Aorta (tissue), 5 donors: ENCODE measurements at regions of chr12 and their contacts with region 1.

Region 1: DNA sequence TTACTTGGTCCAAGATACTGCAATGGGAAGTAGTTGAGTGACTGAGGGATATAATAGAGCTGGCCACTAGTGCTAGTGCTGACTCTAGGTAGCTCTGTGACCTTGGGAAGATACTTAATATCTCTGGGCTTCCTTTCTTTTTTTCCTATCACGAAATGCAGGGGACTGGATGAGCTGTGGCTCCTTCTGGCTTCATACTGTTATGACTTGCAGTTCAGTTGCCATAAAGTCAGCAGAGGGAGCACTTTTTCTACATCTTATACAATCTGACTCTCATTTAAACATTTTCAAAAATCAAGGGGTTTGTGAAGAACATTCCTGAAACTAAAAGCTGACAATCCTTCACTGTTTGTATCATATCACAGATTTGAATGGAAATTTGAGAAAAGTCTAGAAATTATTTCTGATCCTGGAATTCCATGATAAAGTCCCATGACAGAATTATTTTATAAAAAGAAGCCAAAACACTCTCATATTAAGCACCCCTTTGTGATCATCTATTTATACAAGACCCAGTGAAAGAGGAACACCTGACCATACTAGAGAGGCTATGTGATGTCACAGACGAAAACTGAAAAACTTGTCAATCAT is 5.4 kb downstream of the BHLHE41 start:
- DNase-seq: no peak
- ATAC-seq: no peak
- H3K4me3 ChIP-seq: no peak overlapping the region
- H3K27ac ChIP-seq: no peak overlapping the region
- H3K4me1 ChIP-seq: no peaks in the 10 kb centered on the region
- H3K27me3 ChIP-seq: no peaks in the 10 kb centered on the region

Region 2: GRCh38 chr12:25904442-25904841 is 215.0 kb before region 1 on chr12:
- intact Hi-C with region 1: no loop called
- DNase-seq: no peak
- ATAC-seq: no peak
- H3K4me3 ChIP-seq: no peak overlapping the region
- H3K27ac ChIP-seq: no peak overlapping the region
- H3K4me1 ChIP-seq: no peaks in the 10 kb centered on the region
- H3K27me3 ChIP-seq: no peaks in the 10 kb centered on the region

Region 3: GRCh38 chr12:26614020-26614616 is 494.6 kb after region 1 on chr12:
- intact Hi-C with region 1: loop called in 1 of 2 experiments (anchors 5 kb)
- DNase-seq: no peak
- ATAC-seq: no peak
- H3K4me3 ChIP-seq: no peak overlapping the region
- H3K27ac ChIP-seq: no peak overlapping the region
- H3K4me1 ChIP-seq: no peaks in the 10 kb centered on the region
- H3K27me3 ChIP-seq: no peaks in the 10 kb centered on the region